Naive thymus-derived CD4-positive, alpha-beta T cell (primary cell): ENCODE measurements at regions of chr12 and their contacts with region 1.

Region 1: DNA sequence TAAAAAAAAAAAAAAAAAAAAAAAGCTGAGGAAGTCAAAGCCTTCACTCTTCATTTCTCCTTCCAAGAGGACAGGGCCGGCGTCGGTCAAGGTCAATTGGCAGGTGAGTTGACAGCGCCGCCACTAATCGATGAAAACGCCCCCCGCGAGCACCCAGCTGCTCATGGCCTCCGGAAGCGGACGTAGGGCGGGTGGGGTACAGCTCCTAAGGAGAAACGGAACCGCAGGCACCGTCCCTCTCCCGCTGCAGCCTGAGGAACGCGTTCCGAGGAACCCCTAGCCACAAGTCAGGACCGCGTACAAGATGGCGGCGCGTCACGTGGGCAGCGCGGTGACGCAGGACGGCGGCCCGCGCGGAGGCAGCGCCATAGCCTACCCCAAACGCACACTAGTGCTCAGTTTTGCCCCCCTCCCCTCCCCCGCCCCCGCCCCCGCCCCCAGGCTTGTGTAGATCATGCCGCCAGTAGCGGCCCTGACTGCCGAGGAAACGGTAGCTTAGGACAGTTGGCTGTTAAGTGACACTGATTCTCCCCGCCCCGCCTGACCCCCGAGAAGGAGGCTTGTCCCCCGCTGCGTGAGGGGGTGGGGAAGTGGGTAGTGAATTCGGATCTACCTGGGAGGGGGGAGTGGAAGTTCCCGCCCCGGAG is at the start of gene ATF1:
- DNase-seq: peak; percentile 78 to 92 (median 90)
- ATAC-seq: peak; percentile 90
- H3K4me3 ChIP-seq: peak within 1 kb of the TSS; percentile 69
- H3K4me3 Mint-ChIP-seq: peak within 1 kb of the TSS; percentile 89 to 97 (median 91)
- H3K27ac ChIP-seq: peak within 1 kb of the TSS; percentile 94
- H3K27ac Mint-ChIP-seq: peak within 1 kb of the TSS; percentile 92 to 99 (median 98)
- H3K4me1 ChIP-seq: peaks cover 12 to 14% of the 10 kb centered on the region in 2 donors
- H3K4me1 Mint-ChIP-seq: peaks cover 30 to 51% (median 45%) of the 10 kb centered on the region in 7 donors
- H3K27me3 ChIP-seq: no peaks in the 10 kb centered on the region
- H3K27me3 Mint-ChIP-seq: no peaks in the 10 kb centered on the region
- total RNA-seq, gene ATF1: 23.8 to 53.9 (median 51.3) TPM

Region 2: GRCh38 chr12:50111693-50112455 is 651.9 kb before region 1 on chr12 and contains the start of gene COX14:
- CTCF ChIA-PET with region 1: no interaction called
- POLR2A ChIA-PET with region 1: interaction called, 8 read pairs
- intact Hi-C with region 1: loop called (anchors 1 to 5 kb)
- DNase-seq: peak; percentile 97 to 100 (median 99)
- ATAC-seq: peak; percentile 90
- H3K4me3 ChIP-seq: peak within 1 kb of the TSS; percentile 94
- H3K4me3 Mint-ChIP-seq: peak within 1 kb of the TSS; percentile 92 to 100 (median 98)
- H3K27ac ChIP-seq: peak within 1 kb of the TSS; percentile 95
- H3K27ac Mint-ChIP-seq: peak within 1 kb of the TSS; percentile 95 to 99 (median 98)
- H3K4me1 ChIP-seq: peaks cover 14 to 23% of the 10 kb centered on the region in 2 donors
- H3K4me1 Mint-ChIP-seq: peaks cover 15 to 47% (median 40%) of the 10 kb centered on the region in 7 donors
- H3K27me3 ChIP-seq: no peaks in the 10 kb centered on the region
- H3K27me3 Mint-ChIP-seq: no peaks in the 10 kb centered on the region
- total RNA-seq, gene COX14: 37.2 to 49.4 (median 46.9) TPM

Region 3: DNA sequence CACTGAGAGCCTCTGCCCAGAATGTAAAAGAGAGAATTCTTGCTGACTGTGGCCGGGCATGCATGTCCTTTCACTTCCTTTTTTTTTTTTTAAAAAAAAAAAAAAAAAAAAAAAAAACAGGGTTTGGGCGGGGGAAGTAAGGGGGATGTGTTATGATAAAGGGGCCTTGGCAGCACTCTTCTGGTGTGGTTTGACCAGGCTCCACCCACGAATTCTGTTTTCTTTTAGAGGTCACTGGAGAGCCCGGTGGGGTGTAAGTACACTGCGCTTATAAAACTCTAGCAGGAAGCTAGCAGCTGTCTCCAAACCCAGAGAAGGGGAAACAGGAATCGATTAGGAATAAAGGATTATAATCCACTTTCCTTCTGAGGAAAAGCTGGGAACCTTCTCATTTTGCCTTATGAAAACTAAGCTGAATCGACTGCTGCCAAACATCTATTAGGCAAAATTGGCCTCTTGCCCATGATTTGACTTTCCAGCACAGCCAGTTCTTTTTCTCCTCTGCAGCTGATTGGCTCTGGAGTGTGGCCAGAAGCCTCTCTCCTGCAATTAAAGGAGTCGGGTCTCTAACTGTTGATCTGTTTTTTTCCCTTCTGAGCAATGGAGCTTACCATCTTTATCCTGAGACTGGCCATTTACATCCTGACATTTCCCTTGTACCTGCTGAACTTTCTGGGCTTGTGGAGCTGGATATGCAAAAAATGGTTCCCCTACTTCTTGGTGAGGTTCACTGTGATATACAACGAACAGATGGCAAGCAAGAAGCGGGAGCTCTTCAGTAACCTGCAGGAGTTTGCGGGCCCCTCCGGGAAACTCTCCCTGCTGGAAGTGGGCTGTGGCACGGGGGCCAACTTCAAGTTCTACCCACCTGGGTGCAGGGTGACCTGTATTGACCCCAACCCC is 160.9 kb after region 1 on chr12:
- CTCF ChIA-PET with region 1: no interaction called
- POLR2A ChIA-PET with region 1: no interaction called
- intact Hi-C with region 1: no loop called
- DNase-seq: peak in 4 of 9 donors; percentile 1 to 9 (median 4)
- ATAC-seq: peak; percentile 85
- H3K4me3 ChIP-seq: no peak overlapping the region
- H3K4me3 Mint-ChIP-seq: peak overlapping the region; percentile 53 to 84 (median 74)
- H3K27ac ChIP-seq: no peak overlapping the region
- H3K27ac Mint-ChIP-seq: peak overlapping the region in 5 of 9 donors; percentile 1 to 93 (median 56)
- H3K4me1 ChIP-seq: peaks cover 0 to 9% of the 10 kb centered on the region in 2 donors
- H3K4me1 Mint-ChIP-seq: peaks cover 8 to 40% (median 24%) of the 10 kb centered on the region in 7 donors
- H3K27me3 ChIP-seq: no peaks in the 10 kb centered on the region
- H3K27me3 Mint-ChIP-seq: peaks cover 0 to 3% (median 0%) of the 10 kb centered on the region in 5 donors

Region 4: DNA sequence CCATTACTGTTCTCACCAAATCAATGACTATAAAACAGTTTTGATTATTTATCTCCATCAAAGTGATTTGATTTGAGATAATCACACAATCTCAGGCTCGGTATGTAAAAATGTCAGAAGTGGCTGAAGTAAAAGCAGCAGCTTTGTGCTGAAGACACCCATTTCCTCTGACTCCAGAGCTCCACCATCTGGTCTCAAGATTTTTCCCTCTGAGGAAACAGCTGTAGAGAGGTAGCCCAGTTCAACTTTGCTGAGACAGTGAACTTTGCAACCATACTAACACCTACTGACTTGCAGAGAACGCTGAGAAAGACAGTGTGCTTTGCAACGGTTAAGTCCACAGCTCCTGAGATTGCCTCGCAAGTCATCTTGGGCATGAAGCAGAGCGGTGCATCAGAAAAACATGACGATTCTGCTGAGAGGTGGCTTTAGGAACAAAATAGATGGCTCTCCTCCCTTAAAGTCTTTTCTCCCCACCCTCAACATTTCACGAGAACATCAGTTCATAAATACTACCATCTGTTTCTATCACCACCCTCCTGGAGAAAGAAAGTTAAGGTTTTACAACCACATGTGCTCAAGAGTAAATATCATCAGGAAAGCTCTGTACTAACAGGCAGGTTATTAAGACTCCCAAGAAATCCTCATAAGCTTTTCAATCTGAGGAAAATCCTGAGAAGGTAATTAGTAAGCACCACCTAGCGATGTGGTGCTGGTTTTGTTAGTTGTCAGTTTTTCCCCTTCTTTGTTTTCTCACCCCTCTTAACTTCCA is 223.4 kb after region 1 on chr12:
- CTCF ChIA-PET with region 1: interaction called, 23 read pairs
- POLR2A ChIA-PET with region 1: interaction called, 31 read pairs
- intact Hi-C with region 1: loop called in 1 of 2 experiments (anchors 1 kb)
- DNase-seq: peak in 7 of 9 donors; percentile 14 to 56 (median 37)
- ATAC-seq: peak; percentile 53
- H3K4me3 ChIP-seq: no peak overlapping the region
- H3K4me3 Mint-ChIP-seq: no peak overlapping the region
- H3K27ac ChIP-seq: peak overlapping the region; percentile 4
- H3K27ac Mint-ChIP-seq: peak overlapping the region in 7 of 9 donors; percentile 6 to 87 (median 65)
- H3K4me1 ChIP-seq: no peaks in the 10 kb centered on the region
- H3K4me1 Mint-ChIP-seq: peaks cover 0 to 21% (median 9%) of the 10 kb centered on the region in 7 donors
- H3K27me3 ChIP-seq: no peaks in the 10 kb centered on the region
- H3K27me3 Mint-ChIP-seq: no peaks in the 10 kb centered on the region

Region 5: GRCh38 chr12:51083126-51083833 is 319.5 kb after region 1 on chr12 and contains the start of gene CSRNP2:
- CTCF ChIA-PET with region 1: no interaction called
- POLR2A ChIA-PET with region 1: interaction called, 4 read pairs
- intact Hi-C with region 1: loop called (anchors 1 kb)
- DNase-seq: peak; percentile 90 to 95 (median 94)
- ATAC-seq: peak; percentile 100
- H3K4me3 ChIP-seq: peak within 1 kb of the TSS; percentile 78
- H3K4me3 Mint-ChIP-seq: peak within 1 kb of the TSS; percentile 89 to 100 (median 96)
- H3K27ac ChIP-seq: peak within 1 kb of the TSS; percentile 97
- H3K27ac Mint-ChIP-seq: peak within 1 kb of the TSS; percentile 89 to 98 (median 93)
- H3K4me1 ChIP-seq: peaks cover 7% of the 10 kb centered on the region in 2 donors
- H3K4me1 Mint-ChIP-seq: peaks cover 22 to 46% (median 43%) of the 10 kb centered on the region in 7 donors
- H3K27me3 ChIP-seq: no peaks in the 10 kb centered on the region
- H3K27me3 Mint-ChIP-seq: no peaks in the 10 kb centered on the region
- total RNA-seq, gene CSRNP2: 20.0 to 38.7 (median 23.4) TPM

Region 6: GRCh38 chr12:51326762-51327439 is 563.1 kb after region 1 on chr12:
- CTCF ChIA-PET with region 1: no interaction called
- POLR2A ChIA-PET with region 1: no interaction called
- intact Hi-C with region 1: loop called in 1 of 2 experiments (anchors 5 kb)
- DNase-seq: peak in 2 of 9 donors; percentile 10 to 27
- ATAC-seq: peak; percentile 34
- H3K4me3 ChIP-seq: no peak overlapping the region
- H3K4me3 Mint-ChIP-seq: peak overlapping the region; percentile 49 to 85 (median 72)
- H3K27ac ChIP-seq: peak overlapping the region; percentile 60
- H3K27ac Mint-ChIP-seq: peak overlapping the region; percentile 76 to 96 (median 93)
- H3K4me1 ChIP-seq: peaks cover 51 to 67% of the 10 kb centered on the region in 2 donors
- H3K4me1 Mint-ChIP-seq: peaks cover 45 to 92% (median 67%) of the 10 kb centered on the region in 7 donors
- H3K27me3 ChIP-seq: no peaks in the 10 kb centered on the region
- H3K27me3 Mint-ChIP-seq: no peaks in the 10 kb centered on the region

Region 7: DNA sequence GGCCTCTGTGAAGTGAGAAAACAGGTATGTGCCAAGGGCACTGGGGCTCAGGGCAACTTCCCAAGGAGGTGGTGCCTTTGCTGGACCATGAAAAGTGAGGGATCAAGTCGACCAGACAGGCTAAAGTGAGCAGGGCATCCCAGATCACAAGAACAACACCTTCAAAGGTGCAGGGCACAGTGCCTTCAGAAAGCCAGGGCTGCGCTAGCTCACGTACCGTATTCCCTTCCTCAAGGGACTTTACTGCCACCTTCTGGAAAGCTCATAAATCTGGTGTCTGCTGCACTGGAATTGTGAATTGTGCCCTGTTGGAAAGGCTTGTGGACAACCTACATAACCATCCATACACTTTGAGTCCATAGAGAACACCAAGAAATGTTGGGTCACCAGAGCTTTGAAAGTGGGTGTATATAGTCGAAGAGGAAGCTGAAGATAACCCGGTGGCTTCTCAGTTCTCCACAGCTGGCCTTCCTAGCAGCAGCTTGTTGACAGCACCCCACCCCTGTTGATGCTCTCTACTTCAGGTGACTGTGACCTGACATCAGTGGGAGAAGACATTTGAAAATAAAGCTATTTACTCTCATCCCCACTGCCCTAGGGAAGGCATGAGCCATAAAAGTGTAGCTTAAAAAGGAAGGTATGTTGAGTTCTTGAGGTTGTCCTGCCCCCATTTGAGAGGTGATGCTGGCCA is 1060.3 kb after region 1 on chr12:
- CTCF ChIA-PET with region 1: no interaction called
- POLR2A ChIA-PET with region 1: no interaction called
- intact Hi-C with region 1: loop called in 1 of 2 experiments (anchors 5 kb)
- DNase-seq: peak in 5 of 9 donors; percentile 27 to 47 (median 36)
- ATAC-seq: no peak
- H3K4me3 ChIP-seq: no peak overlapping the region
- H3K4me3 Mint-ChIP-seq: peak overlapping the region in 3 of 10 donors; percentile 4 to 17 (median 6)
- H3K27ac ChIP-seq: no peak overlapping the region
- H3K27ac Mint-ChIP-seq: peak overlapping the region in 8 of 9 donors; percentile 16 to 68 (median 54)
- H3K4me1 ChIP-seq: peaks cover 5 to 24% of the 10 kb centered on the region in 2 donors
- H3K4me1 Mint-ChIP-seq: peaks cover 29 to 41% (median 32%) of the 10 kb centered on the region in 7 donors
- H3K27me3 ChIP-seq: no peaks in the 10 kb centered on the region
- H3K27me3 Mint-ChIP-seq: peaks cover 0 to 14% (median 0%) of the 10 kb centered on the region in 5 donors